CD4-positive, alpha-beta memory T cell (primary cell): ENCODE measurements at regions of chr3 and their contacts with region 1.

Region 1: DNA sequence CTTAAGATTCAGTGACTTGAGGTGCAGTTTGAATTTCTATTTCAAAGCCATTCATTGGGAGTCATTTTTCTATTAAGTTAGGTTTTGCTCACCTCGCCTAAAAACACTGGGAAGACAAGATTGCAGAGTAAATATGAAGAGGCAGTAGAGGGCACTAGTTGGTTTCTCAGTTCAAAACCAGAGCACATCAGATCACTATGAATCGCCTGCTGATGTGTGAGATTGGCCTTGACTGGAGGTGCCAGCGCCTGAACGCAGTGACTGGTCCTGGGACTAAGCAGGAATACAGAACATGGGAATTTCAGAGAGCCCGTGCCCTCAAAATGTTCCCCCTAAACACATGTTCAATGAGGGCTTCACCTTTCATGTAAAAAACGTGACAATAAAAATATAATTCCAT is 229.0 kb downstream of the ITPR1 start:
- DNase-seq: peak in 4 of 5 donors; percentile 23 to 47 (median 28)
- H3K4me3 ChIP-seq: no peak overlapping the region
- H3K4me3 Mint-ChIP-seq: no peak overlapping the region
- H3K27ac ChIP-seq: no peak overlapping the region
- H3K27ac Mint-ChIP-seq: peak overlapping the region in 5 of 7 donors; percentile 39 to 86 (median 65)
- H3K4me1 ChIP-seq: peaks cover 12% of the 10 kb centered on the region
- H3K4me1 Mint-ChIP-seq: peaks cover 16 to 23% (median 18%) of the 10 kb centered on the region in 4 donors
- H3K27me3 ChIP-seq: no peaks in the 10 kb centered on the region
- H3K27me3 Mint-ChIP-seq: no peaks in the 10 kb centered on the region

Region 2: DNA sequence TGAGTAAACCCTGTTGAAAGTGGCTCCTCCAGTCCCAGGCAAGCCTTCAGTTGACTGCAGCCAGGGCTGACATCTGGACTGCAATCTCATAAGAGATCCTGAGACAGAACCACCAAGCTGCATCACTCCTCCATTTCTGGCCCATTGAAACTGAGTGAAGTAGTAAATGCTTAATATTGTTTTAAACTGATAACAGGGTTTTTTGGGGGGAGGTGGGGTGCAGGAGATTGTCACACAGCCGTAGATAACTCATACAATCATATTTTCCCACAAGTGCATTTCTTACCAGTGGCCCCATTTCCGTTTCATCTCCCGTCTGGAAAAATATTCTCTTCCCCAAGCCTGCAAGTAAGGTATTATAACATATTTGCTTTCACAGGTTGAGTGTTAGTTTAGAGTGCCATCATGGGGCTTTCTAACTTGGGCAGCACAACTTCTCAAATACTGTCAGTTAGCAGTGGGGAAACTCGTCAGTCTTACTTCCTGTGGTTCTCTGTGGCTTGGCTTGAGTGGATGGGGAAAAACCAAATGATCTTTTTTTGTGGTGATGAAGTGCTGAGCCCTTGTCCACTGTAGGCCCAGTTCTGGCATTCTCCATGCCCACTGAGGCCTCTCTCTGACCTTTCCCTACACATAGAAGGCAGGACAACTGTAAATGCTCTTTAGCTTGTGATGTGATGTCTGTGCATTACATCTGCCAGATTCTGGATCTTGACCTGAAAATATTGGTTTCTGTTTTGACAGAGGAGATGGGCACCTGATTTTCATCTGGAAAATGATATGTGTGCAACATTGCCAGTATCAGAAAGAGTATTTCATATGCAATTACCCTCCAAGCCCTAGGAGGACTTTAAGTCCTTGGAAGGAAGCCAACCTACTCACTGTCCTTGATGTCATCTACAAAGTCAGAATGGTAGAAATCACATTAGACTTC is 167.1 kb after region 1 on chr3:
- CTCF ChIA-PET with region 1: interaction called, 3 read pairs
- POLR2A ChIA-PET with region 1: no interaction called
- intact Hi-C with region 1: loop called (anchors 2 kb)
- DNase-seq: peak in 4 of 5 donors; percentile 39 to 61 (median 50)
- H3K4me3 ChIP-seq: no peak overlapping the region
- H3K4me3 Mint-ChIP-seq: peak overlapping the region in 6 of 8 donors; percentile 7 to 65 (median 43)
- H3K27ac ChIP-seq: no peak overlapping the region
- H3K27ac Mint-ChIP-seq: peak overlapping the region; percentile 53 to 90 (median 74)
- H3K4me1 ChIP-seq: peaks cover 21% of the 10 kb centered on the region
- H3K4me1 Mint-ChIP-seq: peaks cover 15 to 20% (median 19%) of the 10 kb centered on the region in 4 donors
- H3K27me3 ChIP-seq: no peaks in the 10 kb centered on the region
- H3K27me3 Mint-ChIP-seq: no peaks in the 10 kb centered on the region

Region 3: DNA sequence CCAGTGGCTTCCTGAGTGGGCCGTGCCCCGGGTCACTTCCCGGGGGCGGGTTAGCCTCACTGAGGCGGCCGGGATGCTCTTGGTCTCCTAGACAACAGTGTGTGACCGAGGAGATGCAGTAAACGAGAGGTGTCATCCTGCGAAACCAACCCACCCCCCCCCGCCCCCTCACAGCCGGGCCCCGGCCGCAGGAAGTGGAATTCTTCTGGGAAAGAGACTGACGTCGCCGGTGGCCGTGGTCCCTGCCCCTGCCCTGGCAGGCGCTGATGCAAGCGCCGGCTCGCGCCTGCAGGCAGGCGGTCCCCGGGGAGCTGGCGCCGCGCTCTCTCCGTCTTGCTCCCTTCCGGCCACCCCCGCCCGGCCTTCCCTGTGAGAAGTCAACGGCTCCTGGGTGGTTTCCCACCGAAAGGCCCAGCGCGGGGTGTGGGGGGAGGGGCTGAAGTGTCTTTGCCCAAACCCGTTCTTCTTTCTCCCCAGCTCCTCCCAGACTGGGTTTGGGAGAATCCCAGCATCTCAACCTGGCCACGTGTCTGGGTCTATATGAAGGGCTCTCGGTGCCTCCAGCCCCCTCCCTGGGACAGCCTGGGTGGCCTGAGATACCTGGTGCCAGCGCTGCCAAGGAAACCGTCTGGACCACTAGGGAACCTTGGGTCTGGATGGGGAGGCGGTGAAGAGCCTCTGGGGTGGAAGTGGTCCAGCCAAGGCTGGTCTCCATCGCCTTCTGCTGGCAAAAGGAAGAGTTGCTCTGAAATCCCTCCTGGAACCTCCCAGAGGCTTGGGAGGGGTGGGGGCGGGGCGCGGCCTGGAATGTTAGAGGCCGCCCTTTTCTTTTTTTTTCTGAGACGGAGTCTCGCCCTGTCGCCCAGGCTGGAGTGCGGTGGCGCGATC is 304.5 kb after region 1 on chr3:
- CTCF ChIA-PET with region 1: interaction called, 98 read pairs
- POLR2A ChIA-PET with region 1: no interaction called
- intact Hi-C with region 1: loop called (anchors 1 kb)
- DNase-seq: peak; percentile 54 to 77 (median 57)
- H3K4me3 ChIP-seq: peak overlapping the region in 1 of 2 donors; percentile 71
- H3K4me3 Mint-ChIP-seq: peak overlapping the region; percentile 85 to 93 (median 87)
- H3K27ac ChIP-seq: peak overlapping the region; percentile 50
- H3K27ac Mint-ChIP-seq: peak overlapping the region; percentile 81 to 97 (median 93)
- H3K4me1 ChIP-seq: peaks cover 13% of the 10 kb centered on the region
- H3K4me1 Mint-ChIP-seq: peaks cover 15 to 35% (median 23%) of the 10 kb centered on the region in 4 donors
- H3K27me3 ChIP-seq: no peaks in the 10 kb centered on the region
- H3K27me3 Mint-ChIP-seq: no peaks in the 10 kb centered on the region

Region 4: GRCh38 chr3:5036858-5037257 is 314.8 kb after region 1 on chr3:
- CTCF ChIA-PET with region 1: interaction called, 11 read pairs
- POLR2A ChIA-PET with region 1: no interaction called
- intact Hi-C with region 1: no loop called
- DNase-seq: no peak
- H3K4me3 ChIP-seq: no peak overlapping the region
- H3K4me3 Mint-ChIP-seq: no peak overlapping the region
- H3K27ac ChIP-seq: no peak overlapping the region
- H3K27ac Mint-ChIP-seq: no peak overlapping the region
- H3K4me1 ChIP-seq: no peaks in the 10 kb centered on the region
- H3K4me1 Mint-ChIP-seq: peaks cover 0 to 3% (median 0%) of the 10 kb centered on the region in 4 donors
- H3K27me3 ChIP-seq: no peaks in the 10 kb centered on the region
- H3K27me3 Mint-ChIP-seq: no peaks in the 10 kb centered on the region

Region 5: DNA sequence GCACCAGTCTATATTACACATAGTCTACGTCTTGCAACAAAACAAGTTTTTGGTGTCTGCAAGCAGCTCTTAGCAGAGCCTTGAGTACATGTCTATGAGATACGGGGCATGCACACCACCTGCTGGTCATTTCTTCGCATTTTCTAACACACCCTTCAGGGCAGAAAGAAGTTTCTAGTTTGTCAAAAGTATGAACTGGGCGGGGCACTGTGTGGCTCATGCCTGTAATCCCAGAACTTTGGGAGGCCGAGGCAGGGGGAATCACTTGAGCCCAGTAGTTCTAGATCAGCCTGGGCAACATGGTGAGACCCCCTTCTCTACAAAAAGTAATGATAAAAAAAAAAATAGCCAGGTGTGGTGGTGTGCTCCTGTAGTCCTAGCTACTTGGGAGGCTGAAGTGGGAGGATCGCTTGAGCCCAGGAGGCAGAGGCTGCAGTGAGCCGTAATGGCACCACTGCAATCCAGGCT is 335.8 kb after region 1 on chr3:
- CTCF ChIA-PET with region 1: interaction called, 49 read pairs
- POLR2A ChIA-PET with region 1: no interaction called
- intact Hi-C with region 1: no loop called
- DNase-seq: peak; percentile 66 to 82 (median 70)
- H3K4me3 ChIP-seq: no peak overlapping the region
- H3K4me3 Mint-ChIP-seq: no peak overlapping the region
- H3K27ac ChIP-seq: no peak overlapping the region
- H3K27ac Mint-ChIP-seq: no peak overlapping the region
- H3K4me1 ChIP-seq: peaks cover 3% of the 10 kb centered on the region
- H3K4me1 Mint-ChIP-seq: peaks cover 0 to 4% (median 1%) of the 10 kb centered on the region in 4 donors
- H3K27me3 ChIP-seq: no peaks in the 10 kb centered on the region
- H3K27me3 Mint-ChIP-seq: peaks cover 1% of the 10 kb centered on the region in 2 donors